ENCODE measurements at regions of chr4 and their contacts with region 1.

Region 1: DNA sequence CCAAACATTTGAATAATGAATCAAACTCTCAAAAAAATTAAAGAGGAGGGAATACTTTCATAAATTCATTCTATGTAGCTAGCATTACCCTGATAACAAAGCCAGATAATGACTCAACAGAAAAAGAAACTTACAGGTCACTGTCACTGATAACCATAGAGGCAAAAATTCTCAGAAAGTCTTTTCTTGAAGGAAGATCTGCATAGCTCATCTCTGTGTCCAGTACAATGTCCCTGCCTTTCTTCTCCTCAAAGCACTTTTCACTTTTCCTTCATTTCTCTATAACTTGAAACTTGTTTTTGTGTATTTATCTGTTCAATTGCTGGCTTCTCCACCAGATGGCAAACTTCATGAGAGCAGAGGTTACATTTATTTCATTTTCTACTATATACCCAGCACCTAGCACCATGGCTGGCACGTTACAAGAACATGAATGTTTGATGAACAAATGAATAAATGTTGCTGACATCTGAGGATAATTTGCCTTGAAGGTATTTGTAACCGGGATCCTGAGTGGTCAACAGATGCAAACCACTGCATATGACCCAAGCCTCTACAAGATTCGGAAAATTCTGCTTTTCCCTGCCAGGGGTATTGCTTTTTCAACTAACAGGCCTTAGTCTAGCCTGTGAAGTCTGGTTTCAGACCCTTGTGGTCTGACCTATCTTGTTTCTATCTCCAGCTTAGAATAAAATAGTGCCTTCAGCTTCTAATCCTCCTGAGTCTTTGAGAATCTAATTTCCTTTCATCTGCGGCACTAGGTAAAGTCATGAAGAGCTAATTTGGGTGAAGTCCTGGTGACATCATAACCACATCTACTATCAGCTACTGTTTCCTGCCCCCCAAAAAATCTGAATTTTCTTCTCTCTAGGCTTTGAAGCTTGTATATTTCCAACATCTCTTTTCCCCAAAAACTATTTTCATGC is 52.5 kb upstream of the ANTXR2 start:
- DNase-seq: peak in 8 of 9 donors; percentile 7 to 75 (median 64)
- ATAC-seq: peak; percentile 88
- H3K4me3 ChIP-seq: peak overlapping the region; percentile 0
- H3K4me3 Mint-ChIP-seq: peak overlapping the region; percentile 1 to 68 (median 52)
- H3K27ac ChIP-seq: peak overlapping the region; percentile 84
- H3K27ac Mint-ChIP-seq: peak overlapping the region; percentile 83 to 95 (median 89)
- H3K4me1 ChIP-seq: peaks cover 34 to 42% of the 10 kb centered on the region in 2 donors
- H3K4me1 Mint-ChIP-seq: peaks cover 25 to 57% (median 54%) of the 10 kb centered on the region in 7 donors
- H3K27me3 ChIP-seq: no peaks in the 10 kb centered on the region
- H3K27me3 Mint-ChIP-seq: peaks cover 0 to 2% (median 0%) of the 10 kb centered on the region in 5 donors

Region 2: GRCh38 chr4:78938868-78939666 is 1186.4 kb before region 1 on chr4 and contains the start of gene PAQR3:
- CTCF ChIA-PET with region 1: no interaction called
- POLR2A ChIA-PET with region 1: no interaction called
- intact Hi-C with region 1: loop called in 1 of 2 experiments (anchors 5 kb)
- DNase-seq: peak; percentile 70 to 91 (median 86)
- ATAC-seq: peak; percentile 98
- H3K4me3 ChIP-seq: peak within 1 kb of the TSS; percentile 86
- H3K4me3 Mint-ChIP-seq: peak within 1 kb of the TSS; percentile 92 to 100 (median 98)
- H3K27ac ChIP-seq: peak within 1 kb of the TSS; percentile 82
- H3K27ac Mint-ChIP-seq: peak within 1 kb of the TSS; percentile 82 to 97 (median 92)
- H3K4me1 ChIP-seq: peaks cover 5 to 14% of the 10 kb centered on the region in 2 donors
- H3K4me1 Mint-ChIP-seq: peaks cover 23 to 54% (median 39%) of the 10 kb centered on the region in 7 donors
- H3K27me3 ChIP-seq: no peaks in the 10 kb centered on the region
- H3K27me3 Mint-ChIP-seq: peaks cover 8 to 18% (median 11%) of the 10 kb centered on the region in 5 donors
- total RNA-seq, gene PAQR3: 13.1 to 24.3 (median 15.8) TPM

Region 3: DNA sequence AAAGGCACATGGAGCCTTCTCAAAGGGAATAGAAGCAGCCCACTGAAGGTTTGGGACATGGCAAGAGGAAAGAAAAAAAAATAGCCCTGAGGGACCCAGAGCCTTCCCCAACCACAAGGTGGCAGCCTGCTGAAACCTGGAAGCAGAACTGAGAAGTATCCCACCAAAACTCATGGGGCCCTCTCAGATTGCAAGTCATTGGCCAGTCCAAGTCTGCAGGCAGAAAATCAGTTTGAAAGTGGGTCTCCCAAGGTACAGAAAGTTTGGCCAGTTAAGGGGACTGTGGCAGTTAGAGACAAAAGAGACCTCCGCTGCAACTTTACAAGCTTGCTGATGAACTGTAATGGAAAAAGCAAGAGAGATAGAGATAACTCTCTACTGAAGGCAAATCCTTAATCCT is 208.3 kb before region 1 on chr4:
- CTCF ChIA-PET with region 1: no interaction called
- POLR2A ChIA-PET with region 1: no interaction called
- intact Hi-C with region 1: loop called (anchors 1 to 5 kb)
- DNase-seq: peak in 7 of 9 donors; percentile 10 to 43 (median 22)
- ATAC-seq: peak; percentile 62
- H3K4me3 ChIP-seq: no peak overlapping the region
- H3K4me3 Mint-ChIP-seq: no peak overlapping the region
- H3K27ac ChIP-seq: no peak overlapping the region
- H3K27ac Mint-ChIP-seq: no peak overlapping the region
- H3K4me1 ChIP-seq: no peaks in the 10 kb centered on the region
- H3K4me1 Mint-ChIP-seq: peaks cover 0 to 16% (median 6%) of the 10 kb centered on the region in 7 donors
- H3K27me3 ChIP-seq: no peaks in the 10 kb centered on the region
- H3K27me3 Mint-ChIP-seq: no peaks in the 10 kb centered on the region

Region 4: DNA sequence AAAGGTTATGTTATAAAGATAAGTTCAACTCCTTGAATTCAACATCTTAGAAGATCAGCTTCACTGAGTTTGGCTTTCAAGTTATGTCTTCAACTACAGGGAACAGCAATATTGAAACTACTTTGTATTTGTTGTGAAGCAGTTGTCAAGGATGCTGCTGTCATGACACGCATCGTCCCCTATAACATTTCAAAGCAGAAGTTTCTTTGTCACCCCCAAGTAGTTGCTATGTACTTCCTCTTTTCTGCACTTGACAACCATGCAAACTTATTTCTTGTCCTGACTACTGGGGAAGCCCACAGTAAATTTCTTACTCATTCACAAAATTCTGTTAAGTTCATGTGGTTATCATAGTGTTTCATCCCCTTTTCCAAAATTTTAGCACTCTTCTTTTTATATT is 66.8 kb before region 1 on chr4:
- CTCF ChIA-PET with region 1: interaction called, 4 read pairs
- POLR2A ChIA-PET with region 1: no interaction called
- intact Hi-C with region 1: loop called (anchors 1 kb)
- DNase-seq: peak in 7 of 9 donors; percentile 53 to 89 (median 84)
- ATAC-seq: peak; percentile 96
- H3K4me3 ChIP-seq: no peak overlapping the region
- H3K4me3 Mint-ChIP-seq: peak overlapping the region; percentile 54 to 86 (median 74)
- H3K27ac ChIP-seq: peak overlapping the region; percentile 86
- H3K27ac Mint-ChIP-seq: peak overlapping the region; percentile 91 to 99 (median 96)
- H3K4me1 ChIP-seq: peaks cover 10 to 13% of the 10 kb centered on the region in 2 donors
- H3K4me1 Mint-ChIP-seq: peaks cover 12 to 50% (median 42%) of the 10 kb centered on the region in 7 donors
- H3K27me3 ChIP-seq: no peaks in the 10 kb centered on the region
- H3K27me3 Mint-ChIP-seq: no peaks in the 10 kb centered on the region

Region 5: DNA sequence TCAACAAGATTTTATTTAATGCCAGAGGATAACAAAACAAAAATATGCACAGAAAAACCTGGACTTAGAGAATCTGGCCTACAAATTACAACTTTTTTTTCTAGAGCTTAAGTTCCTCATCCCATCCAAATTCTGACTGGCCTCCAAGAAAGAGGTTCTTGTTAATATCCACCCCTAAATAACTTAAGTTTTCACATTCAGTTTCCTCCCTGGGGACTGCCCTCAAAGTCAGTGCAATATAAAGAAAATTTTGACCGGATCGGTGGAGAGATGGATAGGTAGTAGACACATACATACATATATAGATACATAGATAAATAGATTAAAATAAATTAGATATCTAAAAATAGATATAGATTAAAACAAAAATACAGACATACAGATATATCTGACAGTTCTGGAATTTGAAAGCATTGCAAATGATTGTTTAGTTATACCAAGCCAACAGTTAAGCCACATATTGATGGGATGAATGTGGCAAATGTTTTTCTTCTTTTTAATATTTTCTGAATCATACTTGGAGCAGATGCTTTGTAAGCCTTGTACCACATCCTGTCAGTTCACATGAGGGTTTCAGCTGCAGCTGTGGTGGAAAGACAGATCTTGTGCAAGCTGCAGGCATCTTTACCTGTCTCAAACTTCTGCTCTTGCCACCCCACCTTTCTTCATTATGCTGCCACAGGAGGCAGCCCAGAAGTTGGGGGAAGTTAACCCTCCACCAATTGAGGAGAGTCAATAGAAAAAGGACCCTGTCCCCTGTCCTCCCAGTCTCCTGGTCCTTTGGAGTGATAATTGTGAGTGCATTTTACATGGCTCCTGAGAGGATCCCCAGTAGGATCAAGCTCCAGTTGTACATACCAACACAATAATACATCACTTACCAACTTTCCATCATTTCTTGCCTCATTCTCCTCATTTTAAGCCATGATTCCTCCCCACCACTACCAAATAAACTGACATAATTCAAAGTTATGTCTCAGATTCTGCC is 13.3 kb after region 1 on chr4:
- CTCF ChIA-PET with region 1: interaction called, 52 read pairs
- POLR2A ChIA-PET with region 1: interaction called, 11 read pairs
- intact Hi-C with region 1: loop called (anchors 1 kb)
- DNase-seq: peak in 8 of 9 donors; percentile 50 to 77 (median 64)
- ATAC-seq: peak; percentile 89
- H3K4me3 ChIP-seq: no peak overlapping the region
- H3K4me3 Mint-ChIP-seq: peak overlapping the region in 7 of 10 donors; percentile 24 to 65 (median 48)
- H3K27ac ChIP-seq: no peak overlapping the region
- H3K27ac Mint-ChIP-seq: peak overlapping the region; percentile 58 to 91 (median 84)
- H3K4me1 ChIP-seq: peaks cover 20 to 32% of the 10 kb centered on the region in 2 donors
- H3K4me1 Mint-ChIP-seq: peaks cover 30 to 71% (median 56%) of the 10 kb centered on the region in 7 donors
- H3K27me3 ChIP-seq: no peaks in the 10 kb centered on the region
- H3K27me3 Mint-ChIP-seq: no peaks in the 10 kb centered on the region

Region 6: DNA sequence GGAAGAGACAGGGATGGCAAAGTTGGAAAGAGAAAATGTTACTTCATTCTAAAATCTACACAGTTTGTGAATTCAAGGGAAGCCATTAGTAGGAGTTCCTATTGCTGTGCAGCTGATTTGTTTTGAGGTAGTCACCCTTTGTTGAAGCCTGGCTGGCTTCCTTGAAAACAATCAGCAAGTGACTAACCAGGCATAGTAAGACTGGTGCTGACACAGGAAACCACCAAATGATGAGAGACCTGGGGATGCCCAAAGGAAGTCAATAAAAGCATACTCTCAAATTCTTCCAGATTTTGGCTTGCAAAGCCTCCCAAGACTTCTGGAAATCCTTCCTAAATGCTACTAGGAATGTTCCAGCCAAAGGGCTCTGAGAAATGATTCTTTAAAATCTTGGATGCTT is 47.9 kb after region 1 on chr4:
- CTCF ChIA-PET with region 1: interaction called, 154 read pairs
- POLR2A ChIA-PET with region 1: interaction called, 39 read pairs
- intact Hi-C with region 1: loop called (anchors 1 kb)
- DNase-seq: peak in 8 of 9 donors; percentile 42 to 78 (median 72)
- ATAC-seq: peak; percentile 98
- H3K4me3 ChIP-seq: peak overlapping the region; percentile 26
- H3K4me3 Mint-ChIP-seq: peak overlapping the region; percentile 66 to 84 (median 76)
- H3K27ac ChIP-seq: peak overlapping the region; percentile 75
- H3K27ac Mint-ChIP-seq: peak overlapping the region; percentile 92 to 99 (median 96)
- H3K4me1 ChIP-seq: peaks cover 33 to 40% of the 10 kb centered on the region in 2 donors
- H3K4me1 Mint-ChIP-seq: peaks cover 33 to 72% (median 60%) of the 10 kb centered on the region in 7 donors
- H3K27me3 ChIP-seq: no peaks in the 10 kb centered on the region
- H3K27me3 Mint-ChIP-seq: peaks cover 0 to 2% (median 0%) of the 10 kb centered on the region in 5 donors

Region 7: DNA sequence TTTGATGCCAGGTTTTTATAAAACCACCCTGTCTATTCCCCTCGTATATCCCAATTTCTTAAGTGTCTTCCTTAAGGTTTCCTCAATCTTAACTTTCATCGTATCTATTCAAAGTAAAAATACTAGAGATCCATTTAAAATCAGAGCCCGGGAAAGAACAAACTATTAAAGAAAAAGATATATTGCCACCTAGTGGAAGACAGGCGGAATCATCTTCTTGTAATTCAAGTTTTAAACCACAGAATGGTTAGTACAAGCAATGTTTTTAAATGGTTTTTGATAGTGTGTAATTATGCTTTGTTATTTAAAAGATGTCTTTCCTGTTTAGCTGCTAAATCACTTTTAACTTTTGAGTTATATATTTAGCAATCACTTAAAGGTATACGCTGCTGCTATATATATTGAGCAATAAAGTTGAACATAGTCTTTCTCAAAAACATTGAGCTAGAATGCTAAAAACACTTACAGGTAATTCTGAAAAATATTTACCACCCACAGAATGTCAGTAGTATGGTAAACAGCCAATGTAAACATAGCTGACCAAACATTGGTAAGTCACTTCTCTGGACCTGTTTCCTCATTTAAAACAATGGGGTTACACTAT is 90.0 kb after region 1 on chr4:
- CTCF ChIA-PET with region 1: interaction called, 25 read pairs
- POLR2A ChIA-PET with region 1: interaction called, 3 read pairs
- intact Hi-C with region 1: loop called (anchors 1 kb)
- DNase-seq: peak in 6 of 9 donors; percentile 28 to 57 (median 38)
- ATAC-seq: peak; percentile 61
- H3K4me3 ChIP-seq: no peak overlapping the region
- H3K4me3 Mint-ChIP-seq: peak overlapping the region in 2 of 10 donors; percentile 20 to 28
- H3K27ac ChIP-seq: no peak overlapping the region
- H3K27ac Mint-ChIP-seq: no peak overlapping the region
- H3K4me1 ChIP-seq: no peaks in the 10 kb centered on the region
- H3K4me1 Mint-ChIP-seq: peaks cover 0 to 7% (median 0%) of the 10 kb centered on the region in 7 donors
- H3K27me3 ChIP-seq: peaks cover 0 to 4% of the 10 kb centered on the region in 2 donors
- H3K27me3 Mint-ChIP-seq: peaks cover 0 to 61% (median 37%) of the 10 kb centered on the region in 5 donors

Region 8: DNA sequence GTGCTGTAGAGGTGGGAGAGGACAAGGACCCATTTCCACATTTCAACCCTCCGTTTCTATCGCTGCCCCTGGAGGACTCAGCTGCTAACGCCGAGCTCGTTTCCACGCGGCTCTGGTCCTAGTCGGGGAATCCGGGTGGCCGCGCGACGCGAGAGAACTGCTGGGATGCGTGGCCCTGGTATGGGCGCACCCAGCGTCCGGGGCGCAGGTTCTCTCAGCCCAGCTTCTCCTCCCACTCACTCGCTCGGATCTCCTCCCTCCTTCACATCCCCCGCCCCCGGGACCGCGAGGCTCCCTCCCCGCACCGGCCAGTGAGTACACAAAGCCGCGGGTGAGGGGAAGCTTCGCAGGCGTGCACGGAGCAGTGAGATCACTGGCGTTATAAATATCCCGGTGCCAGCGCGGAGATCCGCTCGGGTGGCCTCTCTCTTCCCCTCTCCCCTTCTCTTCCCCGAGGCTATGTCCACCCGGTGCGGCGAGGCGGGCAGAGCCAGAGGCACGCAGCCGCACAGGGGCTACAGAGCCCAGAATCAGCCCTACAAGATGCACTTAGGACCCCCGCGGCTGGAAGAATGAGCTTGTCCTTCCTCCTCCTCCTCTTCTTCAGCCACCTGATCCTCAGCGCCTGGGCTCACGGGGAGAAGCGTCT is 140.9 kb after region 1 on chr4 and contains the start of gene FGF5:
- CTCF ChIA-PET with region 1: no interaction called
- POLR2A ChIA-PET with region 1: no interaction called
- intact Hi-C with region 1: no loop called
- DNase-seq: peak in 1 of 9 donors; percentile 29
- ATAC-seq: peak; percentile 48
- H3K4me3 ChIP-seq: no peak within 1 kb of the TSS
- H3K4me3 Mint-ChIP-seq: peak within 1 kb of the TSS; percentile 69 to 84 (median 78)
- H3K27ac ChIP-seq: no peak within 1 kb of the TSS
- H3K27ac Mint-ChIP-seq: peak within 1 kb of the TSS in 1 of 9 donors; percentile 9
- H3K4me1 ChIP-seq: peaks cover 0 to 10% of the 10 kb centered on the region in 2 donors
- H3K4me1 Mint-ChIP-seq: peaks cover 14 to 44% (median 38%) of the 10 kb centered on the region in 7 donors
- H3K27me3 ChIP-seq: peaks cover 4 to 14% of the 10 kb centered on the region in 2 donors
- H3K27me3 Mint-ChIP-seq: peaks cover 82 to 96% (median 89%) of the 10 kb centered on the region in 5 donors
- total RNA-seq, gene FGF5: 0.05 TPM in 1 of 5 experiments, not detected in the others